A673 (cell line): ENCODE measurements at regions of chr11 and their contacts with region 1.

Region 1: GRCh38 chr11:83257761-83258168 is 28.4 kb downstream of the CCDC90B start:
- DNase-seq: no peak
- H3K4me3 ChIP-seq: no peak overlapping the region
- H3K27ac ChIP-seq: no peak overlapping the region
- H3K4me1 ChIP-seq: no peaks in the 10 kb centered on the region
- H3K27me3 ChIP-seq: no peaks in the 10 kb centered on the region
- CTCF ChIP-seq: no peak

Region 2: DNA sequence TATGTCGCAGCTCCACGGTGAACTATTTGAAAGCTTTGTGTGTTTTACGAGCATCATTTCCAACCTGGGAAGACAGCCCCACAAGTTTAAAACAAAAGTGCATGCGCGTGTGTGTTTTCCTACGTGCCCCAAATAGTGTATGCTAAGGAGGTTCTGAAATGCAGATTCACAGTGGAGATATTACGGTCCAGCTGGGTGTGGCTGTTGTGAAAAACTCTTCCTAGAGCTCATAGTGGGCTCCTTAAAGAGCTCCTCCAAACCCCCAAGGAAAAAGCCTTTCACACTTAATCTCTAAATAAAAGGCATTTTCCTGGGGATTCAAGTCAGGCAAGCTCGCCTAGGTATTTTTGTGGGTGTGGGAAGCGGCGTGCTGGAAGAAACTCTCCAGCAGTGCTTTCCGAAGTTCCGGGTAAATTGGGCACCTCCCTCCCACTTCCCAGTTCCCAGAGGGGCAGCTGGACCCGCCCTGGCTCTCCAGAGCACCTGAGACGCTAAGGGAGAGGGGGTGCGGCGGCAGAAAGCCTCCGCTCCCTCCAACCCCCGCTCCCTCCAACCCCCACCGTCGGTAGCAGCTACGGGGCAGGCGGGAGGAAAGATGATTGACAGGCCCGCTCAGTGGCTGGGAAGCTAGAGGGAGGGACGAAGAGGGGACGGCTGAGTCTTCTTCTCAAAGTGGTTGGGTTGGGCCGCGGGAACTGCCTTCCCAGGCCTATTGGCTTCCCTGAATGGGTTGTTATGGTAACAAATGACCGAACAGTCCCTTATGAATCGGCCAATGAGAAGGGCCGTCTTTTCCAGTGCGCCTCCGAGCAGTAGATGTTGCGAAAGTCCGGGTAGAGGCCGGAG is 101.4 kb before region 1 on chr11:
- CTCF ChIA-PET with region 1: no interaction called
- POLR2A ChIA-PET with region 1: no interaction called
- intact Hi-C with region 1: no loop called
- DNase-seq: peak; percentile 100
- H3K4me3 ChIP-seq: peak overlapping the region; percentile 64
- H3K27ac ChIP-seq: peak overlapping the region; percentile 95
- H3K4me1 ChIP-seq: peaks cover 8% of the 10 kb centered on the region
- H3K27me3 ChIP-seq: no peaks in the 10 kb centered on the region
- CTCF ChIP-seq: no peak

Region 3: GRCh38 chr11:83317757-83318690 is 60.3 kb after region 1 on chr11:
- CTCF ChIA-PET with region 1: no interaction called
- POLR2A ChIA-PET with region 1: no interaction called
- intact Hi-C with region 1: no loop called
- DNase-seq: no peak
- H3K4me3 ChIP-seq: no peak overlapping the region
- H3K27ac ChIP-seq: no peak overlapping the region
- H3K4me1 ChIP-seq: no peaks in the 10 kb centered on the region
- H3K27me3 ChIP-seq: no peaks in the 10 kb centered on the region
- CTCF ChIP-seq: no peak

Region 4: GRCh38 chr11:83502041-83502440 is 244.3 kb after region 1 on chr11:
- CTCF ChIA-PET with region 1: no interaction called
- POLR2A ChIA-PET with region 1: no interaction called
- intact Hi-C with region 1: no loop called
- DNase-seq: no peak
- H3K4me3 ChIP-seq: no peak overlapping the region
- H3K27ac ChIP-seq: peak overlapping the region; percentile 38
- H3K4me1 ChIP-seq: peaks cover 49% of the 10 kb centered on the region
- H3K27me3 ChIP-seq: no peaks in the 10 kb centered on the region
- CTCF ChIP-seq: no peak

Region 5: DNA sequence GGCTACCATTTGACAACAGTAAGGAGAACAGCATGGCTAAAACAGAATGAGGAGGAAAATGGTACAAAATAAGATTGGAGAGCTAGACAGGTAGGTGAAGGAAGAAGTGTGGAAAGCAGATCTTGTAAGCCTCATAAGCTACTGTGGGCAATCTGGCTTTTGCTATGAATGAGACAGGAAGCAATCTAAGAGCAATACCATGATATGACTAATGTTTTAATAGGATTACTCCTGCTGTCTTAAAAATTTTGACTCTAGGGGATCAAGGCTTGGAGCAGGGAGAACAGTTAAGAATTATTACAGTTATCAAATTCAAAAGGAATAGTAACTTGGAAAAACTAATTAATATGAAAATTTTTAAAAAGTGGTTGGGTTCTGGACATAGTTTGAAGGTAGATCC is 1194.4 kb after region 1 on chr11:
- CTCF ChIA-PET with region 1: no interaction called
- POLR2A ChIA-PET with region 1: no interaction called
- intact Hi-C with region 1: loop called (anchors 5 kb)
- DNase-seq: peak; percentile 82
- H3K4me3 ChIP-seq: no peak overlapping the region
- H3K27ac ChIP-seq: no peak overlapping the region
- H3K4me1 ChIP-seq: peaks cover 13% of the 10 kb centered on the region
- H3K27me3 ChIP-seq: no peaks in the 10 kb centered on the region
- CTCF ChIP-seq: no peak